ENCODE measurements at regions of chr7 and their contacts with region 1.

Region 1: DNA sequence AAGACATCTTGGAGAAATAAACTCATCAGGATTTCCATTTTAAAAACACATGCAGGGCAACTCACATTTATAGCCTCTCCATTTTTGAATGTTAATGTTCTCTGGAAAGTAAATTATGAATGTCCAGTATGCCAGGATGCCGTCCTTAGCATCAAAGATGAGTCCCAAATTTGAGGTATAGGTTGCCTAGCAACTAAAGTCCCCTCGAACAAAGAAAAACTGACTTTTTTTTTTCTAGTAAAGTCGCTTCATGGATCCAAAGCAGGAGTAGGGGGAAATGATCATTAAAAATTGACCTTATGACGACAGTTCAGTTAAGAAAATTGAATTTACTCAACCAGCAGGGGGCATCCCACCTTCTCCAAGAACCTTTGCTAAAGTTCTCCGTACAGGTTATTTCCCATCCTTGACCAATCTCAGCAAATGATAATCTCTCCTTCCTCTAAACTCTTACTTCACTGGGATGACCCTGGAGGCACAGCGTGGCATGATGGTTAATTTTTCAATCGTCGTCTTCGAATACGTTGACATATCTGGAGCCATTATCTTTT is 228.4 kb downstream of the CALN1 start:
- DNase-seq: peak; percentile 19 to 40 (median 23)
- ATAC-seq: peak; percentile 65; the same call in 2 of the 3 replicates
- H3K4me3 ChIP-seq: no peak overlapping the region
- H3K27ac ChIP-seq: no peak overlapping the region
- H3K4me1 ChIP-seq: no peaks in the 10 kb centered on the region
- H3K27me3 ChIP-seq: peaks cover 0 to 2% of the 10 kb centered on the region in 2 experiments; a peak in 2 of 5 replicates
- CTCF ChIP-seq: peak in 2 of 3 experiments; percentile 50 to 55; a peak in 4 of 6 replicates
- EP300 ChIP-seq: no peak
- POLR2A ChIP-seq: no peak
- RAD21 ChIP-seq: peak in 1 of 2 experiments; percentile 40; a peak in 2 of 4 replicates

Region 2: DNA sequence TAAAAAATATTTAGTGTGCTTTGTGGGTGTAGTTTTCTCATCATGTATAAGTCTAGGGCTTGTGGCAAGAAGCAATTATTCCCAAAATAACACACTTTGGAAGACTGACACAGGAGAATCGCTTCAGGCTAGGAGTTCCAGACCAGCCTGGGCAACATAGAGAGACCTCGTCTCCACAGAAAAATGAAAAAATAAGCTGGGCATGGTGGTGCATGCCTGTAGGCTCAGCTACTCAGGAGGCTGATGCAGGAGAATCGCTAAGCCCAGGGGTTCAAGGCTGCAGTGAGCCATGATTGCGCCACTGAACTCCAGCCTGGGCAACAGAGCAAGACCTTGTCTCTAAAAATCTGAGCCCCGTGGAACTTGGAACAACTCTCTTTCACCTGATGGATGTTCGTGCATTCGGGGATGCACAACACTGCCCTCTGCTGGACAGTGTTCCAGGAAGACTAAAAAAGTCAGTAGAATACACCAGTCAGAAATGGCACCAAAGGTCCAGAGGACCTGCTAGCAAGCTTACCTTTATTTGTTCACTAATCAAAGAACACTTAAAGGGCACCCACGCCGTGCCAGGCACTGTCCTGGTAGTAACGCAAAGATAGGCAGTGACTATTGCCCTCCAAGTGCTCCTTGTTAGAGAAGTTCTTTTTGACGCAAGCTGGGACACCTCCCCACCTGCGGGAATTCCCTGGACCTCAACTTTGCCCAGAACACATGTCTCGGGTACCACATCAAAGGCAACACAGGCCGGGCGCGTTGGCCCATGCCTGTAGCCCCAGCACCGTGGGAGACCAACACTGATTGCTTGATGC is 310.3 kb after region 1 on chr7:
- CTCF ChIA-PET with region 1: no interaction called
- POLR2A ChIA-PET with region 1: no interaction called
- in situ Hi-C with region 1: no loop called
- intact Hi-C with region 1: loop called (anchors 10 kb)
- DNase-seq: peak; percentile 56 to 79 (median 60)
- ATAC-seq: peak; percentile 86
- H3K4me3 ChIP-seq: no peak overlapping the region
- H3K27ac ChIP-seq: no peak overlapping the region
- H3K4me1 ChIP-seq: no peaks in the 10 kb centered on the region
- H3K27me3 ChIP-seq: peaks cover 4 to 6% of the 10 kb centered on the region in 2 experiments; a peak in 3 of 5 replicates
- CTCF ChIP-seq: peak; percentile 63 to 80 (median 78)
- EP300 ChIP-seq: no peak
- POLR2A ChIP-seq: no peak
- RAD21 ChIP-seq: peak; percentile 41 to 78

Region 3: GRCh38 chr7:72785166-72785955 is 601.6 kb after region 1 on chr7:
- CTCF ChIA-PET with region 1: no interaction called
- POLR2A ChIA-PET with region 1: no interaction called
- in situ Hi-C with region 1: no loop called
- intact Hi-C with region 1: loop called (anchors 5 kb)
- DNase-seq: no peak
- ATAC-seq: no peak
- H3K4me3 ChIP-seq: no peak overlapping the region
- H3K27ac ChIP-seq: no peak overlapping the region
- H3K4me1 ChIP-seq: peaks cover 0 to 6% of the 10 kb centered on the region in 2 experiments; a peak in 3 of 5 replicates
- H3K27me3 ChIP-seq: no peaks in the 10 kb centered on the region
- CTCF ChIP-seq: no peak
- EP300 ChIP-seq: no peak
- POLR2A ChIP-seq: no peak
- RAD21 ChIP-seq: no peak

Measured in K562 (cell line).